MCF 10A (cell line): ENCODE measurements at regions of chr13 and their contacts with region 1.

Region 1: DNA sequence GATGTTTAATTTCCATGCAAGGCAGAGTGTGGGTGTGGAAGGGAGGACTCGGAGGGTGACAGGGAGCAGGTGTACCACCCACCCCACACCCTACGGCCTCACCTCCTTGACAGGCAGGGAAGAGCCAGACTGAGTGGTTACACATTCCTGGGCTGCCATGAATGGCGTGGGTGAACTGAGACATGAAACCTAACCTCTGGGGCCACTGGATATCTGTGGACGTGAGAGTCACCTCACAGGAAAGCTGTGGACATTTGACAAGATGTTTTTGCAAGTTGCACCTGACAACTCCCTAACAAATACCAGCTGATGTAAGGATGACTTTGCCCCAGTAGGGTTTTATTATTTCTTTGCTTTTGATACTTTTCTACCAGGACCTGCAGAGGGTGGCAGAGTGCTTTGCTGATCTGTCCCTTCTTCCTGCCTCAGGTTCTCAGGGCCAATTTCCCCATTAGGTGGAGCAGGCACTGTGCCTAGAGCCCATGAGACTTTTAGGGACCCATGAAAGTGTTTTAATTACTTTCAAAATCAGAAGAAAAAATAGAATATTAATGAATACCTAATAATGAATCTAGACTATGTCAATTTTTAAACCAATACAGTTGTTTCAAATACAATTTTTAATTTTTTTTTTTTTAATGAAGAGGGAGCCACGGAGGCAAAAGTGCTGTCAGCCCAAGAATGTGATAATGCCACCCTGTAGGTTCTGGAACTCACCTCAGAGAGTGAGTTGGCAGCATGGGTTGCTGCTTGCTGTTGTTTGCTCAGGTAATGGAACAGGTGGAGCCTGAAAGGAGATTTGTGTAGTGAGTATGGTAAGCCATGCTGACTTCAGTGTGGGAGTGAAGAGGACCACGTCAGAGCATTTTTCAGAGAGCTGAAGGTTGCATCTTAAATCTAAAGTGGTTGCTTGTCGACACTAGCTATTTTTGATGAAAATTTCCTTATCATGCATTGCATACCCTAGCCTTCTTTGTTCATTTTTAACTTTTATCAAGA is 58.0 kb upstream of the CYSLTR2 start:
- DNase-seq: peak; percentile 70
- H3K4me3 Mint-ChIP-seq: no peak overlapping the region
- H3K27ac Mint-ChIP-seq: no peak overlapping the region
- H3K4me1 Mint-ChIP-seq: no peaks in the 10 kb centered on the region
- H3K27me3 Mint-ChIP-seq: no peaks in the 10 kb centered on the region
- CTCF ChIP-seq: peak; percentile 66

Region 2: GRCh38 chr13:48749699-48750473 is 154.2 kb after region 1 on chr13:
- CTCF ChIA-PET with region 1: interaction called, 7 read pairs
- POLR2A ChIA-PET with region 1: no interaction called
- intact Hi-C with region 1: loop called (anchors 5 kb)
- DNase-seq: peak; percentile 99
- H3K4me3 Mint-ChIP-seq: peak overlapping the region; percentile 17
- H3K27ac Mint-ChIP-seq: peak overlapping the region; percentile 68
- H3K4me1 Mint-ChIP-seq: peaks cover 6% of the 10 kb centered on the region
- H3K27me3 Mint-ChIP-seq: no peaks in the 10 kb centered on the region
- CTCF ChIP-seq: peak; percentile 45